CD4-positive, alpha-beta memory T cell (primary cell): ENCODE measurements at regions of chr19 and their contacts with region 1.

Region 1: GRCh38 chr19:11380653-11381534 is 3.2 kb downstream of the EPOR start:
- DNase-seq: peak; percentile 99
- H3K4me3 ChIP-seq: peak overlapping the region; percentile 59 to 61
- H3K4me3 Mint-ChIP-seq: peak overlapping the region; percentile 91 to 99 (median 98)
- H3K27ac ChIP-seq: peak overlapping the region; percentile 90
- H3K27ac Mint-ChIP-seq: peak overlapping the region; percentile 91 to 100 (median 99)
- H3K4me1 ChIP-seq: peaks cover 53% of the 10 kb centered on the region
- H3K4me1 Mint-ChIP-seq: peaks cover 25 to 41% (median 32%) of the 10 kb centered on the region in 4 donors
- H3K27me3 ChIP-seq: no peaks in the 10 kb centered on the region
- H3K27me3 Mint-ChIP-seq: peaks cover 9 to 11% of the 10 kb centered on the region in 2 donors

Region 2: GRCh38 chr19:11339254-11340098 is 41.4 kb before region 1 on chr19 and contains the start of gene RAB3D:
- CTCF ChIA-PET with region 1: interaction called, 6 read pairs
- POLR2A ChIA-PET with region 1: interaction called, 54 read pairs
- intact Hi-C with region 1: no loop called
- DNase-seq: peak; percentile 52 to 73 (median 57)
- H3K4me3 ChIP-seq: peak within 1 kb of the TSS; percentile 44 to 54
- H3K4me3 Mint-ChIP-seq: peak within 1 kb of the TSS; percentile 76 to 87 (median 82)
- H3K27ac ChIP-seq: peak within 1 kb of the TSS; percentile 33
- H3K27ac Mint-ChIP-seq: peak within 1 kb of the TSS; percentile 3 to 88 (median 71)
- H3K4me1 ChIP-seq: peaks cover 30% of the 10 kb centered on the region
- H3K4me1 Mint-ChIP-seq: peaks cover 16 to 35% (median 27%) of the 10 kb centered on the region in 4 donors
- H3K27me3 ChIP-seq: no peaks in the 10 kb centered on the region
- H3K27me3 Mint-ChIP-seq: no peaks in the 10 kb centered on the region
- total RNA-seq, gene RAB3D: 6.0 to 8.6 TPM

Region 3: GRCh38 chr19:11390933-11391680 is 10.2 kb after region 1 on chr19:
- CTCF ChIA-PET with region 1: interaction called, 13 read pairs
- POLR2A ChIA-PET with region 1: interaction called, 9 read pairs
- intact Hi-C with region 1: no loop called
- DNase-seq: no peak
- H3K4me3 ChIP-seq: no peak overlapping the region
- H3K4me3 Mint-ChIP-seq: no peak overlapping the region
- H3K27ac ChIP-seq: no peak overlapping the region
- H3K27ac Mint-ChIP-seq: no peak overlapping the region
- H3K4me1 ChIP-seq: no peaks in the 10 kb centered on the region
- H3K4me1 Mint-ChIP-seq: peaks cover 5 to 20% (median 5%) of the 10 kb centered on the region in 4 donors
- H3K27me3 ChIP-seq: no peaks in the 10 kb centered on the region
- H3K27me3 Mint-ChIP-seq: peaks cover 4 to 5% of the 10 kb centered on the region in 2 donors

Region 4: GRCh38 chr19:11422163-11423021 is 41.5 kb after region 1 on chr19:
- CTCF ChIA-PET with region 1: interaction called, 4 read pairs
- POLR2A ChIA-PET with region 1: interaction called, 11 read pairs
- intact Hi-C with region 1: loop called (anchors 5 kb)
- DNase-seq: peak; percentile 57 to 76 (median 66)
- H3K4me3 ChIP-seq: peak overlapping the region in 1 of 2 donors; percentile 37
- H3K4me3 Mint-ChIP-seq: peak overlapping the region; percentile 72 to 89 (median 82)
- H3K27ac ChIP-seq: no peak overlapping the region
- H3K27ac Mint-ChIP-seq: peak overlapping the region in 5 of 7 donors; percentile 23 to 78 (median 54)
- H3K4me1 ChIP-seq: peaks cover 49% of the 10 kb centered on the region
- H3K4me1 Mint-ChIP-seq: peaks cover 15 to 47% (median 36%) of the 10 kb centered on the region in 4 donors
- H3K27me3 ChIP-seq: peaks cover 43% of the 10 kb centered on the region
- H3K27me3 Mint-ChIP-seq: peaks cover 39 to 45% of the 10 kb centered on the region in 2 donors

Region 5: DNA sequence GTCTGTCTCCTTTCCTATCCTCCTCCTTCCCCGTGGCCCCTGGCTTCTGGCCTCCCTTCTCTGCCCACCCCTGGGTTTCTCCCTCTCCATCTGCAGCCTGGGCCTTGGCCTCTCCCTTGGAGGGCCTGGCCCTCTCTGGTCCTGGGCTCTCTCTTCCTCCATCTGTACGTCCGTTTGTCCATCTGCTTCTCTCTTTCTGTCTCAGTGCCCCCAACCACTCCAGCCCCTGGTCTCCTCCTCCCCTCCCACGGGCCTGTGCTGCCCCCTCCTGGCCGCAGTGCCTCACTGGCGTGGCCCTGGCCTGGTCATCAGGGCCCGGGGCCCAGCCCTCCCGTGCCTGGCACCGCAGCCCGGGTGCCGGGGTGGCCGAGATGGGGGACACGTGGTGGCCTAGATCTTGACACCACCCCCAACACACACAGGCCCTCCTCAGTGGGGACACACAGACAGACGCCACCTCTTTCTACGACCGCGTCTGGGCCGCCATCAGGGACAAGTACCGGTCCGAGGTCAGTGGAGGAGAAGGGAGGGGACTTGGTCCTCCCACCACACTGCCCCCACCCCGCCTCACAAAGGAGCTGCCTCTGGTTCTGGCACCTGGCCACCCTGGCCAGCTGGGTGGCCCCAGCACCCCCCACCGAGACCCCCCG is 65.9 kb after region 1 on chr19:
- CTCF ChIA-PET with region 1: interaction called, 8 read pairs
- POLR2A ChIA-PET with region 1: no interaction called
- intact Hi-C with region 1: loop called (anchors 1 kb)
- DNase-seq: peak in 4 of 5 donors; percentile 18 to 41 (median 33)
- H3K4me3 ChIP-seq: no peak overlapping the region
- H3K4me3 Mint-ChIP-seq: no peak overlapping the region
- H3K27ac ChIP-seq: no peak overlapping the region
- H3K27ac Mint-ChIP-seq: peak overlapping the region in 2 of 7 donors; percentile 83 to 88
- H3K4me1 ChIP-seq: no peaks in the 10 kb centered on the region
- H3K4me1 Mint-ChIP-seq: peaks cover 0 to 1% (median 0%) of the 10 kb centered on the region in 4 donors
- H3K27me3 ChIP-seq: no peaks in the 10 kb centered on the region
- H3K27me3 Mint-ChIP-seq: no peaks in the 10 kb centered on the region

Region 6: DNA sequence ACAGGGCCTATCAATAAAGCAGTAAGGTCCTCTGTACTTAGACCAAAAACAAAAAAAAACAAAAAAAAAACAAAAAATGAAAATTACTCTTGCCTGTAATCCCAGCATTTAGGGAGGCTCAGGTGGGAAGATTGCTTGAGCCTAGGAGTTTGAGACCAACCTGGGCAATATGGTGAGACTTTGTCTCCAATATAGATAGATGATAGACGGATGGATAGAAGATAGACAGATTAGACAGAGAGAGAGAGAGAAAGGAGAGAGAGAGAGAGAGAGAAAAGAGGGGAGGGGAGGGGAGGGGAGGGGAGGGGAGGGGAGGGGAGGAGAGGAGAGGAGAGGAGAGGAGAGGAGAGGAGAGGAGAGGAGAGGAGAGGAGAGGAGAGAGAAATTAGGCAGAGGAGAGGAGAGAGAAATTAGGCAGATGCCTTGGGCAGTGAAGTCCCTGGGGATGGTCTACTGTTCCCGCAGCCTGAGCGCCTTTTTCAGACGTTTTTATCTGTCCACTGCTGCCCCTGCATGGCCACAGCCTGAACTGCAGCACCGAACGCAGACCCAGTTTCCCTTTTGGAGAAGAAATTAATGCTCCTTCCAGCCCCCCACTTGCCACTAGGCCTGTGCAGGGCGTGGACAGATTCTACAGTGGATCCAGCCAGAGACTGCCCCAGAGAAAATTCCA is 206.5 kb after region 1 on chr19:
- CTCF ChIA-PET with region 1: interaction called, 3 read pairs
- POLR2A ChIA-PET with region 1: no interaction called
- intact Hi-C with region 1: loop called (anchors 1 kb)
- DNase-seq: peak; percentile 63 to 75 (median 70)
- H3K4me3 ChIP-seq: no peak overlapping the region
- H3K4me3 Mint-ChIP-seq: no peak overlapping the region
- H3K27ac ChIP-seq: no peak overlapping the region
- H3K27ac Mint-ChIP-seq: peak overlapping the region in 3 of 7 donors; percentile 35 to 86 (median 82)
- H3K4me1 ChIP-seq: peaks cover 3% of the 10 kb centered on the region
- H3K4me1 Mint-ChIP-seq: peaks cover 0 to 10% (median 1%) of the 10 kb centered on the region in 4 donors
- H3K27me3 ChIP-seq: no peaks in the 10 kb centered on the region
- H3K27me3 Mint-ChIP-seq: peaks cover 0 to 2% of the 10 kb centered on the region in 2 donors